ENCODE measurements at regions of chr3 and their contacts with region 1.

Region 1: GRCh38 chr3:132253262-132253878 is 63.8 kb upstream of the ACP3 start:
- DNase-seq: no peak
- ATAC-seq: peak; percentile 30 to 49

Region 2: DNA sequence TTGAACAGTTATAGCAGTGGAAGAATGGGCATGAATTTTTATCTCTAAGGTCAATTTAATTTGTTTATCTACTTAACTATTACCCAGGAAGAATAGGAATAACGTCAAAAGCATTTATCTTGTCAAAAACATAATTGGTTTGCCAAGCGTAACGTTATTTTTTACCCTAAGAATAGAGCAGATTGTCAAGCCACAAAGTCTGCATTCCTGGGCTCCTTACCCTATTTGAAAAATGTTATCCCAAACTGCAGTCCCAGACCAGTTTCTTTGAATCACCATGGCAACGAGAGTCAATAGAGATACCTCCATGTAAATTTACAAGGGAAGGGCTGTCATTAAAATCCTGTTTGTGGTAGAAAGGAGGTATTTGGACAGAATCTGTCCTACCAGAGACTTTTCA is 279.6 kb before region 1 on chr3:
- intact Hi-C with region 1: no loop called
- DNase-seq: no peak
- ATAC-seq: no peak

Region 3: GRCh38 chr3:132343018-132343612 is 89.7 kb after region 1 on chr3:
- intact Hi-C with region 1: loop called (anchors 2 kb)
- DNase-seq: peak; percentile 27
- ATAC-seq: peak; percentile 75 to 76

Region 4: GRCh38 chr3:132399054-132399929 is 145.9 kb after region 1 on chr3:
- intact Hi-C with region 1: loop called in 1 of 2 experiments (anchors 5 kb)
- DNase-seq: no peak
- ATAC-seq: peak in 1 of 2 donors; percentile 58

Region 5: DNA sequence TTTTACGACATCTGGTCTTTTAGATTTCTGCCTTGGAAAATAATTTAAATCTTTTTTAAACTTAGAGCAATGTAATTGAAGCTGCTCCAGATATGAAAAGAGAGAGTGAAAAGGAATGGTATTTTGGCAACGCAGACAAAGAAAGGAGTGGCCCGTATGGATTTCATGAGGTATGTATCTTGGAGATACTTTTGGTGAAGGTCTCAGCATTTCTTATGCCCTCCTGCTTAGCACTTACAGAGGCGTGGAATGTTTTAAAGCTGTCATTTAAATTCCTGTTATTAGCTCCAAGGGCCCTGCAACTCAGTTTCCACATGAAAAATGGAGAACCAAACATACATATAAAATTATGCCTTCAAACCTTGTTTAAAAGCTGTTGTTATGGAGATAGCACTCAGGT is 228.8 kb after region 1 on chr3:
- intact Hi-C with region 1: no loop called
- DNase-seq: no peak
- ATAC-seq: no peak

Measured in left cardiac atrium (tissue), 4 donors.